ENCODE measurements at regions of chr19 and their contacts with region 1.

Region 1: DNA sequence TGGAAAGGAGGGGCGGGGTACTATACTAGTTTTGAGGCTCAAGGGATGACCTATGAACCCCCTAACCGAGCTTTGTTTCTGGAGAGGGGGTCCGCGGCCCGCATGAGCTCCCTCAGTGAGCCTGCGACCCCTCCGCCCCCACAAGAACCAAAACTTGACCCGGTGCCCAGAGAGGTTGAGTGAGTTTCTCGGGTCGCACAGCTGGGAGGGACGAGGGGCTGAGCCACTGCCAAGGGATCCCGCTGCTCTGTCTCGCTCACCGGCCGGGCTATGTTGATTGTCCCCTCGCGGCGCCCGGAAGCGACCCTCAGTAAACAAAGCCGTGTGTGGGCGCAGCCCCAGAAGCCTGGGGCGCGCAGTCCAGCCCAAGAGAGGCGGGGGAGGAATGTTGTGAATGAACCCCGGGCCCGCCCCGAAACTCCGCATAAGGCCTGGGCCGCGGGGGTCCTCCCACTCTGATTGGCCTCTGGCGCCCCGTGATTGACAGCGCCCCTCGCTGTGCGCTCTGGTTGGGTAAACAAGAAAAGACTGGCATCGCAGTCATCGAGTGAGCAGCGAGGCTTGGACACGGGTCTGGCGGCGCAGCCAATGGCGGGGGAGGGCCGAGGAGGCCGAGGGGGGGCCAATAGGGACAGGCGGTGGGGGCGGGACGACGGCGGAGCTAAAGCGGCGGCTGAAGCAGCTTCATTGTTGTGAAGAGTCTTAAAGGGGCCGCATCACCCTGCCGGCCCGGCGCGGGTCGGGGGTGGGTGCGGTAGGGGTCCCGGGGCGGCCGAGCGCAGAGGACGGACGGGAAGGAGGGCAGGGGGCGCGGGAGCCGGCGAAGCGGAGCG is at the start of gene ZSWIM4:
- DNase-seq: peak; percentile 98
- ATAC-seq: peak; percentile 93
- H3K4me3 ChIP-seq: peak within 1 kb of the TSS; percentile 74 to 76
- H3K27ac ChIP-seq: peak within 1 kb of the TSS; percentile 94
- H3K4me1 ChIP-seq: peaks cover 37 to 56% of the 10 kb centered on the region in 2 experiments
- H3K27me3 ChIP-seq: no peaks in the 10 kb centered on the region
- CTCF ChIP-seq: no peak
- POLR2A ChIP-seq: no peak
- RAD21 ChIP-seq: no peak
- total RNA-seq, gene ZSWIM4: 9.8 TPM

Region 2: GRCh38 chr19:13784731-13785452 is 10.1 kb before region 1 on chr19:
- CTCF ChIA-PET with region 1: interaction called, 10 read pairs
- POLR2A ChIA-PET with region 1: interaction called, 6 read pairs
- RAD21 ChIA-PET with region 1: no interaction called
- intact Hi-C with region 1: no loop called
- DNase-seq: peak; percentile 39
- ATAC-seq: peak; percentile 83
- H3K4me3 ChIP-seq: no peak overlapping the region
- H3K27ac ChIP-seq: peak overlapping the region; percentile 41
- H3K4me1 ChIP-seq: peaks cover 35 to 58% of the 10 kb centered on the region in 2 experiments
- H3K27me3 ChIP-seq: no peaks in the 10 kb centered on the region
- CTCF ChIP-seq: peak; percentile 72 to 87 (median 76)
- POLR2A ChIP-seq: no peak
- RAD21 ChIP-seq: peak; percentile 96

Region 3: DNA sequence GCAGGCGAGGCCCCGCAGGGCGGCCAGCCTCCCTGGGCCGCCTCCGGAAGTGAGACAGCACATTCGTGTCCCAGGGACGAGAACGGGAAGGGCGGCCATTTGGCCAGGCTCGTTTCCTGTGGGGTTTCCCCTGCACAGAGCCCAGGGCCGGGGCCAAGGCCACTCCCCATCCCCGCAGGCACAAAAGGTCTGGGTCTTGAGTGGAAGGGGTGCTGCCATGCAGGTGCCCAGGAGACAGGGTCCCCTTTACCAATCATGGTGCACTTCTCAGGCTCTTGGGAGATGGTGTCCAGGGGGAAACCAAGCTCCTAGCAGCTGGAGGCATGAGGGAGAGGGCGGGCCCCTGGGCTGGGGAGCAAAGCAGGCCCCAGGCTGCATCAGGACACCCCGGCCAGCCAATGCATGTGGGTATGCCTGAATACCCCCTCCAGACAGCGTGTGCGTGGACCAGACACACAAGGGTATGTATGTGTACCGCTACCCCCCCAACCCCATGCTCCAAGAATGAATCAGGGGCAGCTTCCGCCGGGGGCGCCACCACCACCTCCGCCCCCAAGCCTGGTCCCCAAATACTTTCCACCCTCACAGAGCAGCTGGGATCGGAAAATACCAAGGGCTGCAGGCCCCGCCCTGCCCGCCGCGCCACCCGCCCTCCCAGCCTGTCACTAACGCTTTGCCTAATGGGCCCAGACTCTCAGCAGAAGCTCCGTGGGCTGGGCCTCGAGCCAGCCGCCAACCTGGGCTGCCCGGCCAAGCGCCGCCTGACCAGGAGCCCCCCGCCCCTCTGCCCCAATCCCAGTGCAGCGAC is 44.4 kb after region 1 on chr19:
- CTCF ChIA-PET with region 1: interaction called, 3 read pairs
- POLR2A ChIA-PET with region 1: interaction called, 6 read pairs
- RAD21 ChIA-PET with region 1: no interaction called
- intact Hi-C with region 1: loop called (anchors 5 kb)
- DNase-seq: no peak
- ATAC-seq: peak; percentile 9
- H3K4me3 ChIP-seq: peak overlapping the region; percentile 84 to 91
- H3K27ac ChIP-seq: peak overlapping the region; percentile 96
- H3K4me1 ChIP-seq: peaks cover 54 to 87% of the 10 kb centered on the region in 2 experiments
- H3K27me3 ChIP-seq: no peaks in the 10 kb centered on the region
- CTCF ChIP-seq: 0 out of 6 replicates have a peak, but pooled peaks of 1 of the 3 experiments have one; percentile 3
- POLR2A ChIP-seq: no peak
- RAD21 ChIP-seq: no peak

Region 4: GRCh38 chr19:13917888-13918406 is 123.0 kb after region 1 on chr19:
- CTCF ChIA-PET with region 1: no interaction called
- POLR2A ChIA-PET with region 1: no interaction called
- RAD21 ChIA-PET with region 1: no interaction called
- intact Hi-C with region 1: no loop called
- DNase-seq: no peak
- ATAC-seq: no peak
- H3K4me3 ChIP-seq: no peak overlapping the region
- H3K27ac ChIP-seq: no peak overlapping the region
- H3K4me1 ChIP-seq: no peaks in the 10 kb centered on the region
- H3K27me3 ChIP-seq: no peaks in the 10 kb centered on the region
- CTCF ChIP-seq: no peak
- POLR2A ChIP-seq: no peak
- RAD21 ChIP-seq: no peak